Activated naive CD4-positive, alpha-beta T cell treated with anti-CD3 and anti-CD28 coated beads for 36 hours (primary cell): ENCODE measurements at regions of chr9 and their contacts with region 1.

Region 1: DNA sequence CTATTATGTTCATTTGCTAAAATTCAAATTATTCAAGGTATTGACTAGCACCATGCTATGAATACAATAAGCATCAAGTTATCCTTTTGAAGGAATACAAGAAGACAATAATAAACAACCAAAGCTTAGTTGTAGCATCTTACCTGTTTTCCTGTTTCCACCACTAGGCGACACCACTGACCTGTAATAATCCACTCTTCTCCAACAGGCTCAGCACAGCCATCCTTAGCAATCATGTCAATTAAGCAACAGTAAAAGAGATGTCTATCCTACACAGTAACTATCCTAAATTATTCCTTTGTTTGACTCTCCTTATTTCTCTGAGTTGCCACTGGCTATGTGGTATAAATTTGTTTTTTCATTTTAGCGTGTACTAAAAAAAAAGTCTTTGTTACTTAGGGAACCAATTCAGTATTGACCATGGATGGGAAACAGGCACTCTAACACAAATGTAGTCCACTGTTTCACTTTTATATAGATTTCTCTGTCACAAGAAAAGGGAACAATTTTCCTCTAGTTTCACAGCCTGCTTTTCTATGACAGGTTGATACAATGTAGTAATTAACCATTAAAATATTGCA is 46.2 kb downstream of the PCA3 start:
- DNase-seq: peak; percentile 60
- H3K4me3 Mint-ChIP-seq: no peak overlapping the region
- H3K27ac Mint-ChIP-seq: no peak overlapping the region
- H3K4me1 Mint-ChIP-seq: no peaks in the 10 kb centered on the region
- H3K27me3 Mint-ChIP-seq: peaks cover 18% of the 10 kb centered on the region

Region 2: DNA sequence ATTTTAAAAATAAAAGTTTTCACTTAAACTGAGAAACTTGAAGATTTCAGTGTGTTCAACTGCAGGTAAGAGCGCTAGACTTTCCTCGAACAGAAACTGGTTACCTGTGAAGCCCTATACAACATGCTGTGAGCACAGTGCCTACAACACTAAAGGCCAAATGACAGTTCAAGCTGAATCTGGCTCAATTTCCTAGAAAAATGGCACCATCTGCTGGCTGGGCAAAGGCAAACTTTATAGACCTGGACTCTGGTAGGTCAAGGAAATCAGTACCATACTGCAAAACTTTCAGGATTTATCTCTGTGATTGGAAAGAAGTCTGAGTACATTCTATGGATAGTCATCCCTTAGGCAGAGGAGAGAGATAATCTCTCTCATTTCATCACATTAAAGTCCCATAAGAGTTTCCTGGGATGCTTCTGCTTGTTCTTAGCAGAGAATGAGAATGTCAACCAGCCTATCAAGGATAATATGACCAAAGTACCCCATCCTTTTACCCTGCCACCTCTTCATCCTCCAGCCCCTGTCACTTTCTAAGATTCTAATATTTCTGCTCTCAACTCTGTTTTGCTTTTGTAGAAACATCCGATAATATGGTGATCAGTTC is 177.2 kb after region 1 on chr9:
- CTCF ChIA-PET with region 1: interaction called, 5 read pairs
- intact Hi-C with region 1: loop called (anchors 1 kb)
- DNase-seq: peak; percentile 29
- H3K4me3 Mint-ChIP-seq: no peak overlapping the region
- H3K27ac Mint-ChIP-seq: no peak overlapping the region
- H3K4me1 Mint-ChIP-seq: no peaks in the 10 kb centered on the region
- H3K27me3 Mint-ChIP-seq: peaks cover 4% of the 10 kb centered on the region

Region 3: GRCh38 chr9:77011973-77012821 is 201.7 kb after region 1 on chr9:
- CTCF ChIA-PET with region 1: interaction called, 3 read pairs
- intact Hi-C with region 1: loop called (anchors 1 kb)
- DNase-seq: peak; percentile 84
- H3K4me3 Mint-ChIP-seq: peak overlapping the region; percentile 36
- H3K27ac Mint-ChIP-seq: no peak overlapping the region
- H3K4me1 Mint-ChIP-seq: peaks cover 16% of the 10 kb centered on the region
- H3K27me3 Mint-ChIP-seq: peaks cover 69% of the 10 kb centered on the region

Region 4: GRCh38 chr9:77149879-77150278 is 339.4 kb after region 1 on chr9:
- CTCF ChIA-PET with region 1: interaction called, 6 read pairs
- intact Hi-C with region 1: loop called (anchors 1 kb)
- DNase-seq: no peak
- H3K4me3 Mint-ChIP-seq: no peak overlapping the region
- H3K27ac Mint-ChIP-seq: no peak overlapping the region
- H3K4me1 Mint-ChIP-seq: no peaks in the 10 kb centered on the region
- H3K27me3 Mint-ChIP-seq: peaks cover 14% of the 10 kb centered on the region